Mammary epithelial cell (primary cell): ENCODE measurements at regions of chr18 and their contacts with region 1.

Region 1: GRCh38 chr18:7946734-7947377 is 379.7 kb downstream of the PTPRM start:
- DNase-seq: peak; percentile 71
- H3K4me3 ChIP-seq: peak overlapping the region; percentile 31 to 57 (median 34)
- H3K27ac ChIP-seq: peak overlapping the region; percentile 88
- H3K4me1 ChIP-seq: peaks cover 36% of the 10 kb centered on the region
- H3K27me3 ChIP-seq: no peaks in the 10 kb centered on the region
- CTCF ChIP-seq: no peak

Region 2: DNA sequence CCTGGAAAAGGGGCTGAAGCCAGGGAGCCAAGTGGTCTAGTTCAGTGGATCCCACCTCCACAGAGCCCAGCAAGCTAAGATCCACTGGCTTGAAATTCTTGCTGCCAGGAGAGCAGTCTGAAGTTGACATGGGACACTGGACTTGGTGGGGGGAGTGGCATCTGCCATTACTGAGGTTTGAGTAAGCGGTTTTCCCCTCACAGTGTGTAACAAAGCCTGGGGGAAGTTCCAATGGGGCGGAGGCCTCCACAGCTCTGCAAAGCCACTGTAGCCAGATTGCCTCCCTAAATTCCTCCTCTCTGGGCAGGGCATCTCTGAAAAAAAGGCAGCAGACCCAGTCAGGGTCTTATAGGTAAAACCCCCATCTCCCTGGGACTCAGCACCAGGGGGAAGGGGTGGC is 235.4 kb before region 1 on chr18:
- CTCF ChIA-PET with region 1: no interaction called
- dilution Hi-C with region 1: no loop called
- in situ Hi-C with region 1: no loop called
- intact Hi-C with region 1: no loop called
- DNase-seq: peak; percentile 17
- H3K4me3 ChIP-seq: no peak overlapping the region
- H3K27ac ChIP-seq: no peak overlapping the region
- H3K4me1 ChIP-seq: no peaks in the 10 kb centered on the region
- H3K27me3 ChIP-seq: no peaks in the 10 kb centered on the region
- CTCF ChIP-seq: no peak

Region 3: DNA sequence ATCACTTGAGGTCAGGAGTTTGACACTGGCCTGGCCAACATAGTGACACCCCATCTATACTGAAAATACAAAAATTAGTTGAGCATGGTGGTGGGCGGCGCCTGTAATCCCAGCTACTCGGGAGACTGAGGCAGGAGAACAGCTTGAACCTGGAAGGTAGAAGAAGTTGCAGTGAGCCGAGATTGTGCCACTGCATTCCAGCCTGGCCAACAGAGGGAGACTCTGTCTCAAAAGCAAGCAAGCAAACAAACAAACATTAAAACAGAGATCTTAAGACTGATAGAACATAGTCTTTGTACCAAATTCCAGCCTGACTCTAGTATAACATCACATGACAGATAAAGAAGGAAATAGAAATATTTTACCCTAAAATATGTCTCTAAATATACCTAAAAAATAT is 211.7 kb before region 1 on chr18:
- CTCF ChIA-PET with region 1: no interaction called
- dilution Hi-C with region 1: no loop called
- in situ Hi-C with region 1: no loop called
- intact Hi-C with region 1: no loop called
- DNase-seq: no peak
- H3K4me3 ChIP-seq: no peak overlapping the region
- H3K27ac ChIP-seq: no peak overlapping the region
- H3K4me1 ChIP-seq: peaks cover 17% of the 10 kb centered on the region
- H3K27me3 ChIP-seq: no peaks in the 10 kb centered on the region
- CTCF ChIP-seq: peak in 1 of 2 donors; percentile 49

Region 4: DNA sequence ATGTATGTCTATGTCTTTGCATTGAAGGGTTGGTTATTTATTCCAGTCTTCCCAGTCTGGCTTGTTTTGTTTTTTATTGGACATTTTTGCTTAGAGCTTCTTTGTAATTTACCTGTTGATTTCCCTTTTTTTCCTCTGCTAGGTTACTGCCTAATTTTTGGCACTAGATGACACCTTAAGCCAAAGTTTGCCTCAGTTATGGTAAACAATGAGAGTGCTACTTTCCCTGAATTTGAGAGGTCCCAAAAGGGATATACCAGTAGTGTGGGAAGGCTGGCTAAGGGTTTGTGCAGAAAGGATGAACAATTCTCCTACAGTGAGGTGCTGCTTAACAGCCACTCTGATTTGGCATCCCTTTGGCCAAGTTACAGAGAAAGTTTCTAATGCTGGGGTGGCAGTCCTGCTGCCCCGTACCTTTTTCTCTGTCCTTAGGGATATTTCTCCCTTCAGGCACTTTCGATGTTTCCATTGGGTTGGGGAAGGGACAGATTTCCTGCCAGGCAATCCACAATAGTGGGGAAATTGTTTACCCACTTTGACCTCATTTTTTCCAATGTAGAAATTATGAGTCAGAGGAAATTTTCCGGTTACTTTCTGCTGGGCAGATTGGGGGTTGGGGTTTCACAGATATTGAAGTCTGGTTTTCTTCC is 24.8 kb before region 1 on chr18:
- CTCF ChIA-PET with region 1: no interaction called
- dilution Hi-C with region 1: no loop called
- in situ Hi-C with region 1: no loop called
- intact Hi-C with region 1: loop called (anchors 1 kb)
- DNase-seq: peak; percentile 90
- H3K4me3 ChIP-seq: no peak overlapping the region
- H3K27ac ChIP-seq: peak overlapping the region; percentile 89
- H3K4me1 ChIP-seq: peaks cover 36% of the 10 kb centered on the region
- H3K27me3 ChIP-seq: no peaks in the 10 kb centered on the region
- CTCF ChIP-seq: no peak